ENCODE measurements at regions of chr10 and their contacts with region 1.

Region 1: DNA sequence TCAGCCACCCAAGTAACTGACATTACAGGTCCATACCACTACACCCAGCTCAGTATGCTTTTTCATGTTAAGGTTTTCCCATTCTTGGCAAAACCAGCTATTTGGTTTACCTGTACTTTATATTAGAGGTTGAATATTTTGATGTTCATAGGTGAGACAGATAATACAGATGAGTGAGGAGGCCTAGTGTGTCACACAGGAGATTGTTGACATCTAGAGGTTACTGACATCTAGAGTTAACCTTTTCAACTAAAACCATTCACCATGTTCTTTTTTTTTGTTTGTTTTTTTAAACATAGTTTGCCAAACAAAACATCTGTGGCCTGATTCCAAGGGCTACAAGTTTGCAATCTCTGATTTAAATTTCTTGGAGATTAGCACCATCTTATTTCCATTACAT is 8.0 kb downstream of the GHITM start:
- DNase-seq: no peak
- ATAC-seq: no peak
- H3K4me3 ChIP-seq: no peak overlapping the region
- H3K27ac ChIP-seq: no peak overlapping the region
- H3K4me1 ChIP-seq: no peaks in the 10 kb centered on the region
- H3K27me3 ChIP-seq: no peaks in the 10 kb centered on the region
- CTCF ChIP-seq: no peak
- EP300 ChIP-seq: no peak
- POLR2A ChIP-seq: no peak
- RAD21 ChIP-seq: no peak

Region 2: GRCh38 chr10:84166620-84167288 is 19.4 kb after region 1 on chr10:
- CTCF ChIA-PET with region 1: interaction called, 113 read pairs
- POLR2A ChIA-PET with region 1: interaction called, 5 read pairs
- RAD21 ChIA-PET with region 1: interaction called, 31 read pairs
- SMC1A ChIA-PET with region 1: interaction called, 70 read pairs
- in situ Hi-C with region 1: no loop called
- intact Hi-C with region 1: no loop called
- DNase-seq: no peak
- ATAC-seq: peak; percentile 71
- H3K4me3 ChIP-seq: peak overlapping the region; percentile 81
- H3K27ac ChIP-seq: peak overlapping the region; percentile 54; the same call in 1 of the 2 replicates
- H3K4me1 ChIP-seq: peaks cover 24% of the 10 kb centered on the region
- H3K27me3 ChIP-seq: no peaks in the 10 kb centered on the region
- CTCF ChIP-seq: no peak
- EP300 ChIP-seq: no peak
- POLR2A ChIP-seq: peak; percentile 26; the same call in 1 of the 2 replicates
- RAD21 ChIP-seq: no peak

Region 3: DNA sequence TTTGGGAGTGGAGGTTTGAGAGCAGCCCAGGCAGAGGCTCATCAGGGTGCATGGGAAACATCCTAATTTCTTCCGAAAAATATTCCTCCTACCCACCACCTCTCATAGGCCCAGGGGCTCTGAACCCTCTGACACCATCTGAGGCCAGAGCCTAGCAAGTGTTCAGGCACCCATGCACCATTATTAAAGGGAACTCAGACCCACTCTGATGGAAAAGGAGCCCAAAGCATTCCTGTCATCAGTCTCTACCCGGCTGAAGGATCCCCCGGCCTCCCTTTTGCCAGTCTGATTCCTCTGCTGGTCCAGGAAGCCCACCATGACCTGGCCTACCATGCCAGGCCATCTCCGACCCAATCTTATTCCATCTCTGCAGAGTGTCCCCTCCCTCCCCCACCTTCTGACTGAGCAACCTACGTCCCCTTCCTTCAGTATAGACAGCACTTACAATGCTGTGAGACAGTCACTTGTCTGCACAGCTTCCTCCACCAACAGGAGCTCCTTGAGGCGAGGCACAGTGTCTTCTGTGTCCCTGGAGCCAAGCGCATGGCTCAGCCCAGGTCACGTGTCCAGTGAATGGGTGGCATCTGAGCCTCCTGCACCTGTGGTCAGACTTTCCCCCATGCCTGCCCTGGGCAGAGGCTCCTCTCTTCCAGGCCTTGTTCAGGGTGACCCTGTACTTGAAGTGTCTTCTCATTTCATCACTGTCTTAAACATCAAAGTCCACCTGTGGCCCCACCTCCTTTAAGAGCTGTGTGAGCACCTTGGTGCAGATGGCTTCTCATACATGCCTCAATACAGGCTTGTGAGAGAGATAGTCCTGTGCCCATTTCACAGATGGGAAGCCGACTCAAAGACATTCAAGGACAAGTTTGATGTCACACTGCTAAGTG is 25.4 kb after region 1 on chr10:
- CTCF ChIA-PET with region 1: interaction called, 113 read pairs
- POLR2A ChIA-PET with region 1: interaction called, 5 read pairs
- RAD21 ChIA-PET with region 1: interaction called, 31 read pairs
- SMC1A ChIA-PET with region 1: interaction called, 70 read pairs
- in situ Hi-C with region 1: no loop called
- intact Hi-C with region 1: no loop called
- DNase-seq: no peak
- ATAC-seq: peak; percentile 74
- H3K4me3 ChIP-seq: peak overlapping the region; percentile 24; the same call in 1 of the 2 replicates
- H3K27ac ChIP-seq: peak overlapping the region; percentile 98
- H3K4me1 ChIP-seq: peaks cover 32% of the 10 kb centered on the region
- H3K27me3 ChIP-seq: no peaks in the 10 kb centered on the region
- CTCF ChIP-seq: no peak
- EP300 ChIP-seq: no peak
- POLR2A ChIP-seq: peak; percentile 34; the same call in 1 of the 2 replicates
- RAD21 ChIP-seq: no peak

Region 4: DNA sequence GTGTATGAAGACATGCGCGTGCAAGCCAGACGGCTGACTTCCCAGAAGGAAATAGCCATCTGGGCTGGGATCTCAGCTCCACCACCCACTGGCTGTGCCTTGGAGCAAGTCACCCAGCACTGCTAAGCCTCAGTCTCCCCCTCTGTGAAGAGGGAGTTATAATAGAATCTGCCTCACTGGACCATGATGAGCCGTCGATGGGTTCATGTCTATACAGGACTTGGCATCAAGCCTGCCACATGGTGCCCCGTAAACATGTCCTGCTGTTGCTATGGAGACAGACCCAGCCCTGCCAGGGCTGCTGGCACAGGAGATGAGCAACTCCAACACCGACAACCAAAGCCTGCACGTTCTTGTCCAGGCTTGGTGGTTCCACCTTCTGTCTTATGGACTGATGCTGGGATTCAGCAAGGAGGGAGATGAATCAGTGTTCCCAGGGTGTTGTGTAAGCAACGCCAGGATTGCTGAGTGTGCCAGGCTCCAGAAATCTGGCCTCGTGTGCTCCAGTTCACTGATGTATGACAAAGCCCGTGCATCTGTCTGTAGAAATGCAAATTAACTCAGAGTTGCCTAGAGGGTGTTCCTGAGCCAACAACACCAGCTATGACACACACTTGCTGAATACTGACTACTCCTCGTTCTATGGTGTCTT is 31.8 kb after region 1 on chr10:
- CTCF ChIA-PET with region 1: interaction called, 35 read pairs
- POLR2A ChIA-PET with region 1: no interaction called
- RAD21 ChIA-PET with region 1: interaction called, 3 read pairs
- SMC1A ChIA-PET with region 1: interaction called, 15 read pairs
- in situ Hi-C with region 1: no loop called
- intact Hi-C with region 1: no loop called
- DNase-seq: no peak
- ATAC-seq: peak; percentile 90
- H3K4me3 ChIP-seq: no peak overlapping the region
- H3K27ac ChIP-seq: no peak overlapping the region
- H3K4me1 ChIP-seq: peaks cover 26% of the 10 kb centered on the region
- H3K27me3 ChIP-seq: no peaks in the 10 kb centered on the region
- CTCF ChIP-seq: no peak
- EP300 ChIP-seq: no peak
- POLR2A ChIP-seq: no peak
- RAD21 ChIP-seq: no peak

Region 5: DNA sequence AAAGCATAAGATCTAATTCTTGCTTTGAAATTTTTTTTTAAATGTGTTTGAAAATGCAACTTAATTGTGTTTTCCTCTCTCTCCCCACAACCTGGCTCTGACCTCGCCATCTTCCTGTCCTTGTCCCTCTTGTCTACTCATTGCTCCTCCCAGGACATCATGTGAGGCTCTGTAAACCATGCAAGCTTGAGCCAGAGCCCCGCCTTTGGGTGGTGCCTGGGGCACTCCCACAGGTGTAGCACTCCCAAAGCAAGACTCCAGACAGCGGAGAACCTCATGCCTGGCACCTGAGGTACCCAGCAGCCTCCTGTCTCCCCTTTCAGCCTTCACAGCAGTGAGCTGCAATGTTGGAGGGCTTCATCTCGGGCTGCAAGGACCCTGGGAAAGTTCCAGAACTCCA is 37.2 kb after region 1 on chr10:
- CTCF ChIA-PET with region 1: interaction called, 10 read pairs
- POLR2A ChIA-PET with region 1: no interaction called
- RAD21 ChIA-PET with region 1: interaction called, 3 read pairs
- SMC1A ChIA-PET with region 1: interaction called, 3 read pairs
- in situ Hi-C with region 1: no loop called
- intact Hi-C with region 1: no loop called
- DNase-seq: no peak
- ATAC-seq: peak; percentile 54
- H3K4me3 ChIP-seq: no peak overlapping the region
- H3K27ac ChIP-seq: no peak overlapping the region
- H3K4me1 ChIP-seq: no peaks in the 10 kb centered on the region
- H3K27me3 ChIP-seq: no peaks in the 10 kb centered on the region
- CTCF ChIP-seq: no peak
- EP300 ChIP-seq: no peak
- POLR2A ChIP-seq: no peak
- RAD21 ChIP-seq: no peak

Region 6: GRCh38 chr10:84214612-84215235 is 67.4 kb after region 1 on chr10:
- CTCF ChIA-PET with region 1: interaction called, 788 read pairs
- POLR2A ChIA-PET with region 1: no interaction called
- RAD21 ChIA-PET with region 1: interaction called, 28 read pairs
- SMC1A ChIA-PET with region 1: interaction called, 155 read pairs
- in situ Hi-C with region 1: loop called (anchors 10 kb)
- intact Hi-C with region 1: no loop called
- DNase-seq: no peak
- ATAC-seq: peak; percentile 98
- H3K4me3 ChIP-seq: no peak overlapping the region
- H3K27ac ChIP-seq: no peak overlapping the region
- H3K4me1 ChIP-seq: no peaks in the 10 kb centered on the region
- H3K27me3 ChIP-seq: no peaks in the 10 kb centered on the region; a peak in 2 of 4 replicates
- CTCF ChIP-seq: peak; percentile 70 to 78 (median 76)
- EP300 ChIP-seq: no peak
- POLR2A ChIP-seq: no peak
- RAD21 ChIP-seq: peak; percentile 70

Measured in GM12878 (cell line).